RWPE1 (cell line): ENCODE measurements at regions of chr17 and their contacts with region 1.

Region 1: GRCh38 chr17:75720725-75721462 is at the start of gene ITGB4:
- DNase-seq: peak; percentile 92
- H3K27ac ChIP-seq: peak within 1 kb of the TSS; percentile 98
- CTCF ChIP-seq: no peak

Region 2: DNA sequence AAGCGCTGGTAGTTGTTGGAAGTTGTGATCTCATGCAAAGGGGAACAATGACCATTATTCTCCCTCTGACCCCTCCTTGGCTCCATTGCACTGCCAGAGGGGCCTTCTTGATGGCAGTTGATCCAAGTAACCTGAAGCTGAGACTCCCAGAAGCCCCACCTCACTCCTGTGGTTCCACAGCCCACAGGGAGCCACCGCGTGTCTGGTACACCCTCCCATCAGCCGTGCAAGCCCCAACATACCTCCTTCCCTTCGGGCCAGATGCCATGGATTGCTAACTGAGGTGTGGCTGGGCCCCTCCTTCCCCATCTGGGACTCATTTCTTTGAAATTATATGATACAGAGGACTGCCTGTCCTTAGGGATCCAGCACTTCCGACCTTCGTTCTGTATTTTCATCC is 36.0 kb before region 1 on chr17:
- CTCF ChIA-PET with region 1: interaction called, 8 read pairs
- POLR2A ChIA-PET with region 1: interaction called, 39 read pairs
- DNase-seq: peak; percentile 93
- H3K27ac ChIP-seq: peak overlapping the region; percentile 100
- CTCF ChIP-seq: no peak

Region 3: DNA sequence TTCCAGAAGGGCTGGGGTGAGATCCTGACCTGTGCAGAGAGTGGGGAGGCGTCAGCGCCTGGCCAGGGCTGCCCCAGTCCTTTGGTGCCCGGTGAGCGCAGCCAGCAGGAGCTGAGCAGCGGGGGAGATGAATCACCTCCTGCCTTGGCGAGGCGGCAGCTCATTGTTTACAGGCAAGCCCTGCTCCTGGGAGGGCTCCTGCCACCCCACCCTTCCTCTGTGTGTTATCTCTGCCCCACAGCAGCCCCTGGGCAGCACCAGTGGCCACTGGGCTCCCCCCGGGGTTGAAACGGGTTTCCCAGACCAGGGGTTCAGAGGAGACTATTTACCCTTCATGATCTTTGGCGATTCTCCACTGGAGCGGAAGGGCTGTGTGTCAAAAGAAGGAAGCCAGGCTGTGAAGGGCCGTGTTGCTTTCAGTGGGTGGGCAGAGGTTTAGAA is 13.7 kb before region 1 on chr17:
- CTCF ChIA-PET with region 1: no interaction called
- POLR2A ChIA-PET with region 1: interaction called, 10 read pairs
- DNase-seq: peak; percentile 72
- H3K27ac ChIP-seq: peak overlapping the region; percentile 100
- CTCF ChIP-seq: no peak

Region 4: DNA sequence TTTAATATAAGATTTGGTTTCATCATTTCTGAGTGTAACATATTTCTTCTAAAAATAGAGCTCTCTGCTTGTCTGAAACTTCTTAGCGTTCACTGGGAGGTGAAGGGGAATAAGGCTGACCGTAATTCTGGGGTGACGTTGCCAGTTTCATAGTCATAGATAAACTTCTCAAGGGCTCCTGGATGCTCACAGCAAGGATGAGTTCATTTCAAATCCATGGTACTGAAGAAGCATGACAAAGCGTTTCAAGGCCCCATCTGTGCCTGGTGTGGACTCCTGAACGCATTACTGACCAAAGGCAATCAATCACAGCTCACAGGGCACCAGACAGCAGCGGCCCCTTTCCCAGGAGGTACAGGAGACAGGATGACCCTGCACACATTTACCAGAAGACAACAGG is 318.2 kb after region 1 on chr17:
- CTCF ChIA-PET with region 1: no interaction called
- POLR2A ChIA-PET with region 1: no interaction called
- DNase-seq: no peak
- H3K27ac ChIP-seq: peak overlapping the region; percentile 27
- CTCF ChIP-seq: no peak

Region 5: DNA sequence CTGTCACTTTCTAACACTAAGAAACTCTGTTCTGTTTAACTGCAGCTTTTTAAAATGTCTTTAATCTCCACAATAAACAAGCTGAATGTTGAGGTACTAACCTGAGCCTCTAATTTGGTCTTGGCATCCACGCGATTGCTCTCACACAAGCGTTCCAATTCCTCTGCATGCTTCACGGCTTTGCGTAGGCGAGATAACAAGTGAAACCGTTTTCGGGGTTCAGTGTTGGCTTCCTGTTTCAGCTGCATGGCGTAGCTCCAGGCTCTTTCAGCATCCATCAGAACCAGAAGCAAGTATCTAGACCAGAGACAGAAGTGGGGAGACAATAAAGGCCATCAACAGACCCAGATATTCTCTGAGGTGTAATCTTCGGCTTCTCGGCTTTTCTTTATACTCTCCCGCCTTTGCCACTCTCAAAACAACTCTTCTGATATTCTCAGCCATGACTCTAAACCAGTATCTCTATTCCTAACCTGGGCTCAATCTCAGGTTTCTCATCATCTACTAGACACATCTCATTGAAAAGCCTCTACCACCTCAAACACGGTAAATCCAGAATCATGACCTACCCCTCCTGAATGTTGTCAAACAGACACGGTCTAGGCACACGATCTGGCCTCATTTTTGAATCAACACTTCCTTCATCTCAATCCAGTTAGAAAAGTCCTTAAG is 343.1 kb after region 1 on chr17:
- CTCF ChIA-PET with region 1: no interaction called
- POLR2A ChIA-PET with region 1: no interaction called
- DNase-seq: no peak
- H3K27ac ChIP-seq: no peak overlapping the region
- CTCF ChIP-seq: no peak